Cardiac septum (tissue), 1 donor: ENCODE measurements at regions of chr3 and their contacts with region 1.

Region 1: GRCh38 chr3:101849051-101849720 is at the start of gene NFKBIZ:
- DNase-seq: peak; percentile 98
- total RNA-seq, gene NFKBIZ: 16.0 TPM

Region 2: GRCh38 chr3:101588616-101589015 is 260.6 kb before region 1 on chr3:
- intact Hi-C with region 1: loop called (anchors 5 kb)
- DNase-seq: no peak

Region 3: DNA sequence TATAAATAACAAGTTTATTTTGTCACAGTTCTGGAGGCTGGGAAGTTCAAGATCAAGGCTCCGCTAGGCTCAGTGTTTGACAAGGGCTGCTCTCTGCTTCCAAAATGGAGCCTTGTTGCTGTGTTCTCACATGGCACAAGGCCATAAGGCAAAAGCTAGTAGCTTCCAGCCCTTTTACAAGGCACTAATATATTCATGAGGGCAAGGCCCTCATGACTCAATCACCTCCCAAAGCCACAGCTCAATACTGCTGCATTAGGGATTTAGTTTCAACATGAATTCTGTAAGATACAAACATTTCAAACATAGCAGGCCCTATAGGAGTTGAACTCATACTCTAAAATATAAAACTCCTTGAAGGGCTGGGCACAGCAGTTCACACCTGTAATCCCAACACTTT is 202.5 kb before region 1 on chr3:
- intact Hi-C with region 1: no loop called
- DNase-seq: no peak

Region 4: DNA sequence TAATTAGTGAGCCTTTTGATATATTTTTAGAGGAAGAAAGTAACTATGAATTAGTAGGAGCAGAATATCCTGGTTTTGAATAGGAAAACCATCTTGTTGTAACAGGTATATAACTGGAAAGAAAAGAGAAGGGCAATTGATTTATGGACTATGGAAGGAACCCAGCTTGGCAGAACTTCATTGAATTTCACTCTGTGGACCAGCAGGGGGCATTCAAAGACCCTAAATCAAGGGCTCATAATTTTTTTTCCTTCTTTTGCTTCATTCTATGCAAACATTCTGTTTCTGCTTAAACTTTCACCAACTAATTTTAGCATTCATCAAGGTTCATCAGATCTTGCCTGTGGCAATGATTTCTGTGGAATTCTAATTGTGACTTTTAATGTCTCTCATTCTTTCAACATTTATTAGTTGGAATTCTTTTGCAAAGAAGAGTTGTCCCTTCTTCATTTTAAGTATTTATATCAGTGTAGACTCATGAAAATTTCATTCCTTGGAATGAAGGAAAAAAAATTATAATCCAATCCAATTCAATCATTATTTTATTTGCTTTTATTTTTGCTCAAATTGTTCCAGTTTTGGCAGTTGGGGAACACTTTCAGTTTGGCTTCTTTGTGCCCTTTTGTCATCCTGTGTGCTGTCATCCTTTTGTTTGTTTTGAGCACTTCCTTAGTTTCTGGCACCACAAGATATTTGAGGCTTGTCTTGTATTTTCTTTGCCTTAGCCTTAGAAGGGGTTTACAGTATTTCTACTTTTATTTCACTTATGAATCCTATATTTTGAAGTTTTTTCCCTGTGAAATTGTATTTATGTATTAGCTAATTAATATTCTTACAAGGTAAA is 39.8 kb before region 1 on chr3:
- intact Hi-C with region 1: loop called (anchors 5 kb)
- DNase-seq: no peak

Region 5: GRCh38 chr3:101827211-101828174 is 21.7 kb before region 1 on chr3:
- intact Hi-C with region 1: loop called (anchors 1 kb)
- DNase-seq: peak; percentile 90

Region 6: DNA sequence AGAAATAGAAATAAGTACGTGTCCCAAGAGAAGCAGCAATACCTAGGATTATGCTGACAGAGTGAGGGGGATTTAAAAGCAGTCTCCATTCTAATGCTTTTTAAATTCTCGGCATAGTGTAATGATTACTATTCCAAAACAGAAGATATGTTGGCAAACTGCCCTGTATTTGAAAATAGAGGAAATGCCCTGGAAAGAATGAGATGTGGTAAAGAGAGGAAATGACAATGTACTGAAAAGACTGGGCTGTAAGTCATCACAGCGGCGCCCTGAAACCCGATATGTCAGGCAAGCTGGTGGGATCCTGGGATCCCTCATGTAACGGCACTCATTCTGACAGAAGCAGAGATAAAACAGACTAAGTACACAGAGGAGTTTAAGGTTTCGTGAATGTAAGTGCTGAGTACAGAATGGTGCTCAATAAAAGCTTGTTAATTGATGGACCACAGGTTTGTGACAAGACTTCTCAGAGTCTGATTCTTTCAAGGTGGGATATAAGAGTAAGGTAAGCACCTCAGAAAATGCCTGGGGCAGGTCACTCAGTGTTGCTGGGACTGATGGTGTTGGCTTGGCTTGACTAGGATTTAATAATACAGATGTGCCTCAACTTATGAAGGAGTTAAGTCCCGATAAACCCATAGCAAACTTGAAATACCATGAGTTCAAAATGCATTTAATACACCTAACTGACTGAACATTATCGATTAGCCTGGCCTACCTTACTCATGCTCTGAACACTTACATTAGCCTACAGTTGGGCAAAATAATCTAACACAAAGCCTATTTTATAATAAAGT is 91.5 kb after region 1 on chr3:
- intact Hi-C with region 1: loop called (anchors 5 kb)
- DNase-seq: peak; percentile 80

Region 7: DNA sequence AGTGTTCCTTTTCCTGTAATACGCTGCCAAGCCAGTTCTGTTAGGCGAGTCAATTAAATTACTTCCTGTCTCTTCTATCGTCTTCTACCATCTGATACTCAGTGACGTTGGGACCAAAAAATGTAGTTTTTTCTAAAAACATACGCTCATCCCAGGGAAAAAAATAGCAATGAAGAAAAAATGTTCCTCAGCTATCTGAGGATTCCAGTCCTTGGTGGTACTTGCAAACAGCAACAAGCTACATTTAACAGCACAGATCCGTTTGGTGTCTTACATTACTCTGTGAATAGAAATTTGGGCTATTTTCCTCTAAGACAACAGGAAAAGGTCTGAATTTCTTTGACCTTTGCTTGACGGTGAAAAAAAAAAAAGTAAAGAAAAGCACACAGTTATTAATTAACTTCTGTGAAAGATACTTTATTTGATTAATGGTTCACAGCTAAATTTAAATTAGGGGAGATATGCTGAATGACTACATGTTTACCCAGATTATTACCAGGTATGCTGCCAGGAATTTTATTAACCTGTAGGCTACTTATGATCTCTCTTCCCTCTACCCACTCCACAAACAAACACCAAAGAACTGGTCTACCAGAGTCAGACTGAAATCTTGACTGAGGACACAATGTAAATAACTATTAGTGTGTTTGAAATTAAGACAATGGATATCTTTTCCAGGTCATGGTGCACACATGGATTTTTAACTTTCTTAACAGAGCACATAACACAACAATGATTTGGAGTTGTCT is 331.3 kb after region 1 on chr3:
- intact Hi-C with region 1: loop called (anchors 5 kb)
- DNase-seq: no peak

Region 8: GRCh38 chr3:102229062-102229655 is 380.0 kb after region 1 on chr3:
- intact Hi-C with region 1: loop called (anchors 5 kb)
- DNase-seq: peak; percentile 81